WTC11 (cell line): ENCODE measurements at regions of chr20 and their contacts with region 1.

Region 1: GRCh38 chr20:56843817-56844216 is 214.7 kb downstream of the TFAP2C start:
- DNase-seq: peak; percentile 52
- ATAC-seq: peak; percentile 82
- H3K4me3 Mint-ChIP-seq: no peak overlapping the region
- H3K27ac Mint-ChIP-seq: no peak overlapping the region
- H3K4me1 Mint-ChIP-seq: peaks cover 10% of the 10 kb centered on the region
- H3K27me3 Mint-ChIP-seq: peaks cover 4% of the 10 kb centered on the region; the same call in 1 of the 2 replicates
- CTCF ChIP-seq: 0 out of 2 replicates have a peak, but pooled peaks have one; percentile 22

Region 2: GRCh38 chr20:56826705-56827631 is 16.8 kb before region 1 on chr20:
- CTCF ChIA-PET with region 1: interaction called, 17 read pairs
- POLR2A ChIA-PET with region 1: interaction called, 3 read pairs
- DNase-seq: no peak
- ATAC-seq: peak; percentile 17; the same call in 1 of the 2 replicates
- H3K4me3 Mint-ChIP-seq: no peak overlapping the region
- H3K27ac Mint-ChIP-seq: 0 out of 2 replicates have a peak overlapping the region, but pooled peaks have one; percentile 7
- H3K4me1 Mint-ChIP-seq: peaks cover 54% of the 10 kb centered on the region
- H3K27me3 Mint-ChIP-seq: no peaks in the 10 kb centered on the region; the same call in 1 of the 2 replicates
- CTCF ChIP-seq: no peak

Region 3: GRCh38 chr20:56859801-56860261 is 16.0 kb after region 1 on chr20:
- CTCF ChIA-PET with region 1: interaction called, 43 read pairs
- POLR2A ChIA-PET with region 1: no interaction called
- DNase-seq: peak; percentile 40
- ATAC-seq: peak; percentile 89
- H3K4me3 Mint-ChIP-seq: peak overlapping the region; percentile 49
- H3K27ac Mint-ChIP-seq: no peak overlapping the region
- H3K4me1 Mint-ChIP-seq: peaks cover 41% of the 10 kb centered on the region
- H3K27me3 Mint-ChIP-seq: peaks cover 20% of the 10 kb centered on the region
- CTCF ChIP-seq: no peak

Region 4: GRCh38 chr20:56909918-56910714 is 66.3 kb after region 1 on chr20:
- CTCF ChIA-PET with region 1: no interaction called
- POLR2A ChIA-PET with region 1: no interaction called
- DNase-seq: no peak
- ATAC-seq: no peak
- H3K4me3 Mint-ChIP-seq: no peak overlapping the region
- H3K27ac Mint-ChIP-seq: no peak overlapping the region
- H3K4me1 Mint-ChIP-seq: peaks cover 11% of the 10 kb centered on the region
- H3K27me3 Mint-ChIP-seq: peaks cover 11% of the 10 kb centered on the region
- CTCF ChIP-seq: no peak

Region 5: DNA sequence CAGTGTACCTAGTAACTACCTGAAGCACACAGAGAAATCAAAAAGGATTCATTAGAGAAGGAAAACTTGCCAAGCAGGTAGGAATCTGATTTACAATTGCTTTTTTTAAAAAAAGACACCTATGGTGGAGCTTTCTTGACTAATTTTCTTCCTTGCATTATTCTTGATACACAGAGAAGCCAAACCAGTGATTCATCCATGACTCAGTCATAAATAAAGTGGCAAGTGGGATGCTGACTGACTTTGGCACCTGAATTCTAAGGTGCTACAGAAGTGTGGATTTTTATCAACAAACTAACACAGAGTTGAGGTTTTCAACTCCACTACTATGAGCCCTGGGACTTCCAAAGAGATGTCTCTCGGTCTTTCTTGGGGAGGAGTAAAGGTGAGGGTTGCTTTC is 141.5 kb after region 1 on chr20:
- CTCF ChIA-PET with region 1: interaction called, 14 read pairs
- POLR2A ChIA-PET with region 1: no interaction called
- DNase-seq: no peak
- ATAC-seq: no peak
- H3K4me3 Mint-ChIP-seq: no peak overlapping the region
- H3K27ac Mint-ChIP-seq: no peak overlapping the region
- H3K4me1 Mint-ChIP-seq: peaks cover 5% of the 10 kb centered on the region; the same call in 1 of the 2 replicates
- H3K27me3 Mint-ChIP-seq: peaks cover 6% of the 10 kb centered on the region; the same call in 1 of the 2 replicates
- CTCF ChIP-seq: no peak

Region 6: DNA sequence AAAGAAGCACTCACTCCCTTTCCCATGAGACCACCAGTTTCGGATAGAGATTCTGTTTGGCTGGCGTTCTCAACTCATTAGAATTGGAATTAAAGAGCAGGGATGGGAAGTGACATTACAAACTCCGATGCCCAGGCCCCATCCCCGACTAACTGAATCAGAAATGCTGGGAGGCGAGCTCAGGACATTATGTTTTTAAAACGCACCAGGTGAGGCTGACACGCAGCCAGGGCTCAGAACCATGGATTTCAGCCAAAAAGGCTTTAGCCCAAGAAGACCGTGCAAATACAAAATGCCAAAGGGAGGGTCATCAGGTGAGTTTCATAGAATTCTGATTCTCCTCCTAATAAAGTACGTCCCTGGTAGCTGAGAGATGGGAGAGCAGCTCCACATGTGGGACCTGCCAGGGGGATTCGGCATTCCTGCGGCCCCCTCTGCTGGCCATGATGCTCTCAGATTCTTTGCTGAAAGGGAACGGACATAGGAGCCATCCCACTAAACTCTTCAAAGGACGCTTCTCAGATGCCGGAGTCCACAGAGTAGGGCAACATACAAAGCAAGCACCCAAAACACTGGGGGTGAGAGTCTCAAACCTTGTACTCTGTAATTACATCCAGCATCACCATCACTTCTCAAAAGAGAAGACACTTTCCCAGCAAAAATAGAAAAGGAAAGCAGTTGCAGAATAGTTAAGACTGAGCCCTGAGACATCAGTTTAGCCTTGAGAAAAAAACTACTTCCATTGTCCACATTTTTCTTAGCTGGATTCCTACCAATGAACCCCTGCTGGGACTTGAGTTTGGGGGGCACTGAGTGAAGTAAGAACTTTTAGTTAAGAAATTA is 217.5 kb after region 1 on chr20:
- CTCF ChIA-PET with region 1: interaction called, 21 read pairs
- POLR2A ChIA-PET with region 1: no interaction called
- DNase-seq: peak; percentile 80
- ATAC-seq: peak; percentile 94
- H3K4me3 Mint-ChIP-seq: no peak overlapping the region
- H3K27ac Mint-ChIP-seq: no peak overlapping the region
- H3K4me1 Mint-ChIP-seq: peaks cover 9% of the 10 kb centered on the region
- H3K27me3 Mint-ChIP-seq: no peaks in the 10 kb centered on the region; the same call in 1 of the 2 replicates
- CTCF ChIP-seq: peak; percentile 22; the same call in 1 of the 2 replicates